HEK293 (cell line): ENCODE measurements at regions of chr2 and their contacts with region 1.

Region 1: DNA sequence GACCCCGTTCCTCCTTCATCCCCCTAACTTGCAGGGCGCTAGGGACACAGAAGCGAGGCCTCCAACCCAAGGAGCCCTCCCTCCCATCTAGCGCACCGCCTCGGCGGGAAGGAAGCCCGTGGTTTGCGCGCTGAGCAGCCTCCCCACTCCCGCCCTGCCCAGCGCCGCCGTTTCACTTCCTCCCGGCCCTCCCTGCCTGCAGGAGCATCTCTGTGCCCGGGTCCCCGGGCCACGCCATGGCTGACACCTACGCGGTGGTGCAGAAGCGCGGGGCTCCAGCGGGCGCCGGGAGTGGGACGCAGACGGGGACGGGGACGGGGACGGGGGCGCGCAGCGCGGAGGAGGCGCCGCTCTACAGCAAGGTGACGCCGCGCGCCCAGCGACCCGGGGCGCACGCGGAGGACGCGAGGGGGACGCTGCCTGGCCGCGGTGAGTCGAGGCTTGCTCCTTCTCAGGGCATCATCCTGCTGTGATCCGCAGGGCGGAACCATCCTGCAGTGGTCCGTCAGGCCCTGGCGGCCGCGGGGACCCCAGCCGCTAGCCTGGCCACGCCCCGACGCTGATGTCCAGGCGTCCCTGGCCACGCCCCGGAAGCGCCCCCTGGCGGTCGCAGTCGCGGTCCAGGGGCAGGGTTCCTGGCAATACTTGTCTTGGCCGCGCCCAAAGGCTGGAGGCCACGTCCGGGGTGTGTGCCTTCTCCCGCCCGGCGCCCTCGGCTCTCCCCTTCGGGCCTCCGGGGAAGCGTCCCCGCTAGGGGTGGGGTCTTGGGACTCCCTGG is 16.4 kb downstream of the PTPN18 start:
- H3K4me3 ChIP-seq: peak overlapping the region; percentile 71
- H3K27ac ChIP-seq: peak overlapping the region; percentile 63; the same call in 1 of the 2 replicates
- H3K4me1 ChIP-seq: 0 out of 2 replicates have a peak, but pooled peaks cover 3% of the 10 kb centered on the region
- CTCF ChIP-seq: peak; percentile 96

Region 2: DNA sequence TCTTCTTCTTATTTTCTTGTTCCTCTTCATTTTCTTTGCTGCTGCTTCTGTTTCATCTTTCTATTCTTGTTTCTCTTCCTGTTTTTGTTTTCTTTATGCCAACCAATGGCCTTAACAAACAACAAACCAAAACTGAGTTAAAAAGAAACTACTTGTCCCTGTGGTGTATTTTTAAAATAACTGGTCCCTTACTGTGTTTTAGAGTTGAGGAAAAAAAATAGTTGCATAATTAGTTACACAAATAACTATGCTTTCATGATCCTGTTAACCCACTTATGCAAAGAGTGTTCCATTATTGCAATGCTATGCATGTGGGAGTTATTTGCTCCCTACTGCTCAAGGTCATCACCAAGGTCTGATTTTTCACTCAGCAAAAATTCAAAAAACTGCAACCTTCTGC is 69.1 kb before region 1 on chr2:
- CTCF ChIA-PET with region 1: no interaction called
- POLR2A ChIA-PET with region 1: no interaction called
- H3K4me3 ChIP-seq: no peak overlapping the region
- H3K27ac ChIP-seq: no peak overlapping the region
- H3K4me1 ChIP-seq: no peaks in the 10 kb centered on the region
- CTCF ChIP-seq: no peak

Region 3: GRCh38 chr2:130391058-130391871 is 19.0 kb after region 1 on chr2:
- CTCF ChIA-PET with region 1: interaction called, 17 read pairs
- POLR2A ChIA-PET with region 1: interaction called, 11 read pairs
- H3K4me3 ChIP-seq: peak overlapping the region; percentile 51
- H3K27ac ChIP-seq: peak overlapping the region; percentile 66
- H3K4me1 ChIP-seq: no peaks in the 10 kb centered on the region
- CTCF ChIP-seq: no peak